Right ventricle myocardium inferior (tissue), 1 donor: ENCODE measurements at regions of chr19 and their contacts with region 1.

Region 1: GRCh38 chr19:2774953-2775555 is 8.0 kb downstream of the SGTA start:
- DNase-seq: peak; percentile 54
- ATAC-seq: peak; percentile 0

Region 2: DNA sequence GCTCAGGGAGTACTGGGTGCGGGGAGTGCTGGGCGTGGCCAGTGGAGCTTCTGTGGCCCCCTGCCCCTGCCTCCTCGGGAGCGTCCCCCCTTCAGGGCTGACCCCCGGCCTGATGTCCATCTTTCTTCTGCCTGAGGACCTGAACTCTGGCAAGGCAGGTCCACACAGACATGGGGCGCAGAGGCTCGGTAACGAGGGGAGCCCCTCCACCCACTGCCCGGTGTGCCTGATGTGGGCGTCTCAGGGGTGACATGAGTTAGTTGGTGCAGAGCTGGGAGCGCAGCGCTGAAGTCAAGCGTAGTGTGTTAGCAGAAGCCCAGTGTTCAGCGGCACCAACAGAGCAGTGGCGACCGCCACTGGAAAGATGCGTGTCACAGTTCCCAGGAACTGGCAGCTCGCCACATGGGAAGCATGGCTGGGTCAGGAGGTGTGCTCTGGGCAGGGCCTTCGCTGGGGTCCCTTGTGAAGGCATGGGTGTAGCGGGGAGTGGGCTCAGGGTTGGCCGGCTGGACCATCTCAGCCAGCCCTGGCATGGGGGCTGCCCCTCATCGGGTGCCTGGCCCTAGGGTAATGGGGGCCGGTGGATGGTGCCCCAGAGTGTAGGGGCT is 21.7 kb after region 1 on chr19:
- intact Hi-C with region 1: loop called (anchors 1 kb)
- DNase-seq: peak; percentile 65
- ATAC-seq: peak; percentile 43